ENCODE measurements at regions of chr17 and their contacts with region 1.

Region 1: GRCh38 chr17:28552246-28552999 is at the start of gene UNC119:
- DNase-seq: peak; percentile 72 to 98 (median 84)
- ATAC-seq: peak; percentile 95
- H3K4me3 ChIP-seq: peak within 1 kb of the TSS; percentile 93 to 98
- H3K27ac ChIP-seq: peak within 1 kb of the TSS in 1 of 2 donors; percentile 77
- H3K4me1 ChIP-seq: peaks cover 0 to 49% of the 10 kb centered on the region in 2 donors
- H3K27me3 ChIP-seq: no peaks in the 10 kb centered on the region
- CTCF ChIP-seq: no peak
- polyA plus RNA-seq, gene UNC119: 29.1 to 36.7 (median 35.9) TPM

Region 2: GRCh38 chr17:28612936-28613872 is 60.8 kb after region 1 on chr17:
- intact Hi-C with region 1: loop called in 1 of 2 experiments (anchors 10 kb)
- DNase-seq: peak in 1 of 4 donors; percentile 45
- ATAC-seq: peak; percentile 73
- H3K4me3 ChIP-seq: no peak overlapping the region
- H3K27ac ChIP-seq: no peak overlapping the region
- H3K4me1 ChIP-seq: no peaks in the 10 kb centered on the region
- H3K27me3 ChIP-seq: no peaks in the 10 kb centered on the region
- CTCF ChIP-seq: peak; percentile 35 to 41

Measured in left lung (tissue), 14 donors.